GM12878 (cell line): ENCODE measurements at regions of chr6 and their contacts with region 1.

Region 1: DNA sequence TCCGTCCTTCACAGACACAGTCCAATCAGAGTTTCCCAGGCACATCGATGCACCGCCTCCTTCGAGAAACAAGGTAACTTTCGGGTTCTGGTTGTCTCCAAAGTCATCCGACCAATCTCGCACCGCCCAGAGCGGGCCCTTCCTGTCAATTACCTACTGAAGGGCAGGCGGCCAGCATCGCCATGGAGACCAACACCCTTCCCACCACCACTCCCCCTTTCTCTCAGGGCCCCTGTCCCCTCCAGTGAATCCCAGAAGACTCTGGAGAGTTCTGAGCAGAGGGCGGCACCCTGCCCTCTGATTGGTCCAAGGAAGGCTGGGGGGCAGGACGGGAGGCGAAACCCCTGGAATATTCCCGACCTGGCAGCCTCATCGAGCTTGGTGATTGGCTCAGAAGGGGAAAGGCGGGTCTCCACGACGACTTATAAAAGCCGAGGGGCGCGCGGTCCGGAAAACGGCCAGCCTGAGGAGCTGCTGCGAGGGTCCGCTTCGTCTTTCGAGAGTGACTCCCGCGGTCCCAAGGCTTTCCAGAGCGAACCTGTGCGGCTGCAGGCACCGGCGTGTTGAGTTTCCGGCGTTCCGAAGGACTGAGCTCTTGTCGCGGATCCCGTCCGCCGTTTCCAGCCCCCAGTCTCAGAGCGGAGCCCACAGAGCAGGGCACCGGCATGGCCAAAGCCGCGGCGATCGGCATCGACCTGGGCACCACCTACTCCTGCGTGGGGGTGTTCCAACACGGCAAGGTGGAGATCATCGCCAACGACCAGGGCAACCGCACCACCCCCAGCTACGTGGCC is at the start of gene HSPA1B:
- DNase-seq: peak; percentile 97
- ATAC-seq: peak; percentile 86
- H3K4me3 ChIP-seq: peak within 1 kb of the TSS; percentile 78
- H3K27ac ChIP-seq: peak within 1 kb of the TSS; percentile 87
- H3K4me1 ChIP-seq: peaks cover 12% of the 10 kb centered on the region
- H3K27me3 ChIP-seq: no peaks in the 10 kb centered on the region
- CTCF ChIP-seq: no peak
- EP300 ChIP-seq: peak in 1 of 2 experiments; percentile 86; a peak in 2 of 4 replicates
- POLR2A ChIP-seq: peak; percentile 95
- RAD21 ChIP-seq: no peak
- polyA plus RNA-seq, gene HSPA1B: 0.11 to 0.33 TPM

Region 2: GRCh38 chr6:31474871-31475286 is 352.6 kb before region 1 on chr6:
- CTCF ChIA-PET with region 1: no interaction called
- POLR2A ChIA-PET with region 1: no interaction called
- RAD21 ChIA-PET with region 1: no interaction called
- SMC1A ChIA-PET with region 1: no interaction called
- in situ Hi-C with region 1: no loop called
- intact Hi-C with region 1: no loop called
- DNase-seq: no peak
- ATAC-seq: peak; percentile 46
- H3K4me3 ChIP-seq: no peak overlapping the region
- H3K27ac ChIP-seq: no peak overlapping the region
- H3K4me1 ChIP-seq: peaks cover 4% of the 10 kb centered on the region; the same call in 1 of the 2 replicates
- H3K27me3 ChIP-seq: no peaks in the 10 kb centered on the region
- CTCF ChIP-seq: peak; percentile 11 to 56 (median 37); a peak in 3 of 6 replicates
- EP300 ChIP-seq: no peak
- POLR2A ChIP-seq: peak; percentile 62; the same call in 1 of the 2 replicates
- RAD21 ChIP-seq: no peak

Region 3: DNA sequence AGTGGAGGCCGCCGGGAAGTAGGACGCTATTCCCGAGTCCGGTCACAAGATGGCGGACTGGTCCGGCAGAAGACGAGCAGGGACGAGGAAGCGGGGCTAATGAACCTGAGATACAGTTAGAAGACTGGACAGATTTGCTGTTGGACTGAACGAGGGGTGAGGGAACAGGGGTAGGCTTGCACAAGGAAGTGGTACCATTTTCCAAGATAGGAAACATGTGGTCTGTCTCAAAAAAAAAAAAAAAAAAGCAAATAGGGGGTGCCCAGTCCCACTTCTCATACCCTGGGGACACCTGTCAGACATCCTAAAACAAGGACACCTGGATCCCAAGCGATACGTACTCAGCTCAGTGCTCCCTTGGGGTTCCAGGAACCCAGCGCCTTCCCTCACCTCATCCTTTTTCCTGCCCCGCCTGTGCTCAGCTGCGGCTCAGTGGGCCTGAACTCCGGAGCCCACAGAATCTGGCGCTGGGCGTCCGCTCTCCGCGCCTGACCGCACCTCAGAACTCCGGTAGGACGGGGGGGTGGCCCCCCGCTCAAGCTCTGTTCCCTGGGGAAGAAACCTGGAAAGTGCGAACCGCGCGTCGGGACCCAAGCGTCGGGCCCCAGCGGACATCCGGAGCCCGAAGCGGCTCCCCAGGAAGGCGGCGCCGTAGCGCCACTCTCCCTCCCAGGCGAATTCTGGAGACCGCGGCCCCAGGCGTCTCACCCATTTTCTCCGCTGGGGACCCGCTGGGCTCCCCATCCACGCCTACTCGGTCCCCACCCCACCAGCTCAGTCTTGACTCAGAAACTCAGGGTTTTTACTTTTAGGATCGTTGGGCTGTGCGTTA is 146.4 kb before region 1 on chr6 and contains the start of gene LY6G5C:
- CTCF ChIA-PET with region 1: interaction called, 11 read pairs
- POLR2A ChIA-PET with region 1: interaction called, 3 read pairs
- RAD21 ChIA-PET with region 1: interaction called, 30 read pairs
- SMC1A ChIA-PET with region 1: interaction called, 12 read pairs
- in situ Hi-C with region 1: no loop called
- intact Hi-C with region 1: loop called (anchors 1 kb)
- DNase-seq: no peak
- ATAC-seq: peak; percentile 83
- H3K4me3 ChIP-seq: peak within 1 kb of the TSS; percentile 71
- H3K27ac ChIP-seq: peak within 1 kb of the TSS; percentile 15; the same call in 1 of the 2 replicates
- H3K4me1 ChIP-seq: peaks cover 6% of the 10 kb centered on the region
- H3K27me3 ChIP-seq: no peaks in the 10 kb centered on the region
- CTCF ChIP-seq: peak; percentile 74 to 91 (median 75)
- EP300 ChIP-seq: no peak
- POLR2A ChIP-seq: no peak
- RAD21 ChIP-seq: peak; percentile 93
- polyA plus RNA-seq, gene LY6G5C: 0.87 to 1.2 TPM

Region 4: DNA sequence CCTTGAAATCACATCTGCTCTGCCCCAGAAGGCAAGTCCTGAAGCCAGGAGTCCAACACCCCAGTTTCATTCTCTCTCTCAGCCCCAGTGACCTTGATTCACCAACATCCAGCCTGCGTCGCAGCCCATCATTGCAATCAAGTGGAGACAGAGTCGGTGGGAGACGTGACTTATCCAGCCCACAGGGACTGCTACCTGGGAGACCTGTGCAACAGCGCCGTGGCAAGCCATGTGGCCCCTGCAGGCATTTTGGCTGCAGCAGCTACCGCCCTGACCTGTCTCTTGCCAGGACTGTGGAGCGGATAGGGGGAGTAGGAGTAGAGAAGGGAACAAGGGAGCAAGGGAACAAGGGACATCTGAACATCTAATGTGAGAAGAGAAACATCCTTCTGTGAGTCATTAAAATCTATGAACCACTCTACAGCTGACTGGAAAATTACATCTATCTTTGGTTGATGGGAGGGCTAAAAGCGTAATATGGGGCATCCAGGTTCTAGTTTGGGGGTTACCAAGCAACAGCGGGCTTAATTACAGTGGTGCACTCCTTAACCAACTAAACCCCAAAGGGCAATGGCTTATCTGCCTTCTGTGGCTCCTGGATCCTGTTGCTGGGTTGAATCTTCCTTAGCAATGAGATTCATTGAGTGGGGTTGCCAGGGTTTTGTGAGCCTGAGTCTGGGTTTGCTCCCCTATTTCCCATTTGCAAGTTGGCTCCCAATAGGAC is 109.8 kb before region 1 on chr6:
- CTCF ChIA-PET with region 1: no interaction called
- POLR2A ChIA-PET with region 1: no interaction called
- RAD21 ChIA-PET with region 1: no interaction called
- SMC1A ChIA-PET with region 1: no interaction called
- in situ Hi-C with region 1: no loop called
- intact Hi-C with region 1: no loop called
- DNase-seq: no peak
- ATAC-seq: peak; percentile 39; the same call in 1 of the 3 replicates
- H3K4me3 ChIP-seq: no peak overlapping the region
- H3K27ac ChIP-seq: no peak overlapping the region
- H3K4me1 ChIP-seq: no peaks in the 10 kb centered on the region
- H3K27me3 ChIP-seq: peaks cover 0 to 2% of the 10 kb centered on the region in 2 experiments; a peak in 2 of 4 replicates
- CTCF ChIP-seq: no peak
- EP300 ChIP-seq: no peak
- POLR2A ChIP-seq: no peak
- RAD21 ChIP-seq: no peak

Region 5: GRCh38 chr6:31739639-31740396 is 87.7 kb before region 1 on chr6 and contains the start of gene MSH5:
- CTCF ChIA-PET with region 1: interaction called, 26 read pairs
- POLR2A ChIA-PET with region 1: interaction called, 158 read pairs
- RAD21 ChIA-PET with region 1: interaction called, 53 read pairs
- SMC1A ChIA-PET with region 1: interaction called, 30 read pairs
- in situ Hi-C with region 1: no loop called
- intact Hi-C with region 1: loop called (anchors 2 kb)
- DNase-seq: peak; percentile 98
- ATAC-seq: peak; percentile 81
- H3K4me3 ChIP-seq: peak within 1 kb of the TSS; percentile 100
- H3K27ac ChIP-seq: peak within 1 kb of the TSS; percentile 99
- H3K4me1 ChIP-seq: peaks cover 19% of the 10 kb centered on the region
- H3K27me3 ChIP-seq: no peaks in the 10 kb centered on the region
- CTCF ChIP-seq: no peak
- EP300 ChIP-seq: no peak; a peak in 1 of 4 replicates
- POLR2A ChIP-seq: peak; percentile 78
- RAD21 ChIP-seq: no peak
- polyA plus RNA-seq, gene MSH5: 9.1 to 10.1 TPM

Region 6: GRCh38 chr6:31795616-31796298 is 31.7 kb before region 1 on chr6 and contains the start of gene VARS1:
- CTCF ChIA-PET with region 1: interaction called, 13 read pairs
- POLR2A ChIA-PET with region 1: interaction called, 28 read pairs
- RAD21 ChIA-PET with region 1: interaction called, 17 read pairs
- SMC1A ChIA-PET with region 1: interaction called, 11 read pairs
- in situ Hi-C with region 1: no loop called
- intact Hi-C with region 1: loop called (anchors 5 kb)
- DNase-seq: peak; percentile 62
- ATAC-seq: peak; percentile 88
- H3K4me3 ChIP-seq: peak within 1 kb of the TSS; percentile 81
- H3K27ac ChIP-seq: peak within 1 kb of the TSS; percentile 95
- H3K4me1 ChIP-seq: peaks cover 4% of the 10 kb centered on the region
- H3K27me3 ChIP-seq: no peaks in the 10 kb centered on the region
- CTCF ChIP-seq: peak; percentile 84 to 98 (median 88); a peak in 5 of 6 replicates
- EP300 ChIP-seq: no peak
- POLR2A ChIP-seq: peak; percentile 76
- RAD21 ChIP-seq: peak; percentile 53
- polyA plus RNA-seq, gene VARS1: 1.2 to 5.7 TPM

Region 7: GRCh38 chr6:31862344-31863227 is 35.1 kb after region 1 on chr6 and contains the start of gene NEU1:
- CTCF ChIA-PET with region 1: interaction called, 4 read pairs
- POLR2A ChIA-PET with region 1: interaction called, 19 read pairs
- RAD21 ChIA-PET with region 1: interaction called, 9 read pairs
- SMC1A ChIA-PET with region 1: interaction called, 24 read pairs
- in situ Hi-C with region 1: no loop called
- intact Hi-C with region 1: no loop called
- DNase-seq: peak; percentile 97
- ATAC-seq: peak; percentile 98
- H3K4me3 ChIP-seq: peak within 1 kb of the TSS; percentile 94
- H3K27ac ChIP-seq: peak within 1 kb of the TSS; percentile 63
- H3K4me1 ChIP-seq: peaks cover 11% of the 10 kb centered on the region
- H3K27me3 ChIP-seq: no peaks in the 10 kb centered on the region
- CTCF ChIP-seq: no peak
- EP300 ChIP-seq: peak in 1 of 2 experiments; percentile 13; a peak in 1 of 4 replicates
- POLR2A ChIP-seq: peak; percentile 100
- RAD21 ChIP-seq: no peak
- polyA plus RNA-seq, gene NEU1: 7.2 to 12.5 TPM